Heart right ventricle (tissue), 16 donors: ENCODE measurements at regions of chr12 and their contacts with region 1.

Region 1: GRCh38 chr12:100375038-100375735 is 18.3 kb downstream of the SLC17A8 start:
- DNase-seq: peak; percentile 71 to 74
- ATAC-seq: peak; percentile 78 to 97 (median 94)
- H3K4me3 ChIP-seq: peak overlapping the region in 2 of 10 donors; percentile 5 to 33
- H3K27ac ChIP-seq: no peak overlapping the region
- H3K4me1 ChIP-seq: peaks cover 0 to 14% (median 4%) of the 10 kb centered on the region in 9 donors
- H3K27me3 ChIP-seq: peaks cover 0 to 8% (median 0%) of the 10 kb centered on the region in 7 donors
- CTCF ChIP-seq: peak in 3 of 9 donors; percentile 8 to 22 (median 10)

Region 2: DNA sequence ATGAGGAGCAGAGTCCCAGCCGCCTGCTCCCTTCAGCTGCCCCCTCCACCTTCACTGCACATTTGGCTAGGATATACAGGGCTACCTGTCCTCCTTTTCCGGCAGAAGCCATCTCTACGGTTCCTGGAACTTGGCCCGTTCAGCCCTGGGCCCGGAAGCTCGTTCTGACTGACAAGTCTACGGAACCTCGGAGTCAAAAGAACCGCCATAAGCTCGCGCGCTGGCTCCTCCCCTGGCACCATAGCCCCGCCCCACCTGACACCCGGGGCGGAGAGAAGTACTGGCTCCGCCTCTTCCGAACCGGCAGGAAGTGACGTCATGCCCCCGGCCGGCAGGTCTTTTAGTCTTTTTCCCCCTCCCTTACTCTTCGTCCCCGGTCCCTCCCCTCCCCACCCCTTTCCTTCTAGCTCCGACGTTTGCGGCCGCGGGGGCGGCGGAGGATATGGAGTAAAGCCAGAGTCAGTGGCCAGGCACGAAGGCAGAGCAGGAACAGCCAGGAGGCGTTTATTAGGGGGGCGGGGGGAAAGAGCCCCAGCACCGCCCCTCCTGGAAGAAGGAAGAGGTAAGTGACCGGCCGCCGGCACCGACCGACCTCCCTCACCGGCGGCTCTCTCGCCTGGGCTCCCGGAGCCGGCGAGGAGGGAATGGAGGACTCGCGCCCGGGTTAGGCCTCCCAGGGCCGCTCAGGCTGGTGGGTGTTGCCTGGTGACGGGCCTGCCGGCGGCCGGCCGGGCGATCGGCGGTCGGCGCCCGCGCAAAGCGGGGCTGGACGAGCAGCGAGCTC is 108.2 kb before region 1 on chr12 and contains the starts of genes DEPDC4 and SCYL2:
- intact Hi-C with region 1: no loop called
- DNase-seq: peak; percentile 94 to 95
- ATAC-seq: peak; percentile 96 to 99 (median 98)
- H3K4me3 ChIP-seq: peak within 1 kb of the TSS; percentile 69 to 97 (median 88)
- H3K27ac ChIP-seq: peak within 1 kb of the TSS; percentile 75 to 99 (median 96)
- H3K4me1 ChIP-seq: peaks cover 2 to 48% (median 36%) of the 10 kb centered on the region in 9 donors
- H3K27me3 ChIP-seq: no peaks in the 10 kb centered on the region
- CTCF ChIP-seq: peak in 3 of 9 donors; percentile 22 to 39 (median 38)
- total RNA-seq, gene DEPDC4: 0.47 to 2.0 (median 0.72) TPM
- total RNA-seq, gene SCYL2: 25.8 to 40.0 (median 32.9) TPM

Region 3: DNA sequence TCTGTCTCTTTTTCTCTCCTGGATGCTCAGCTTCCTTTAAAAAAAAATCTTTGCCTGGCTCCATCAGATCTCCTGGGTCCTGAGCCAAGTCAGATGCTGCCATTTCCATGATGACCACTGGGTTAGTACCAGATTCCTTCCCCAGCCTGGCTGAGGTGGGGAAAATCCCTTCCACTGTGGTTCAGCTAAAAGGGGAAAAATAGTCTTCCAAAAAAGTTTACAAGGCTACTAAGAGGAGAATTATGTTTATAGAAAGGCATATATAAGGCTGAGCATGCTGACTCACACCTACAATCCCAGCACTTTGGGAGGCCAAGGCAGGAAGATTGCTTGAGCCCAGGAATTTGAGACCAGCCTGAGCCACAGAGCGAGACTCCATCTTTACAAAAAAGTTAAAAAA is 169.9 kb after region 1 on chr12:
- intact Hi-C with region 1: loop called in 1 of 10 experiments (anchors 10 kb)
- DNase-seq: no peak
- ATAC-seq: no peak
- H3K4me3 ChIP-seq: no peak overlapping the region
- H3K27ac ChIP-seq: no peak overlapping the region
- H3K4me1 ChIP-seq: no peaks in the 10 kb centered on the region
- H3K27me3 ChIP-seq: peaks cover 0 to 3% (median 0%) of the 10 kb centered on the region in 7 donors
- CTCF ChIP-seq: no peak

Region 4: GRCh38 chr12:100877776-100878175 is 502.6 kb after region 1 on chr12:
- intact Hi-C with region 1: no loop called
- DNase-seq: no peak
- ATAC-seq: no peak
- H3K4me3 ChIP-seq: no peak overlapping the region
- H3K27ac ChIP-seq: no peak overlapping the region
- H3K4me1 ChIP-seq: no peaks in the 10 kb centered on the region
- H3K27me3 ChIP-seq: no peaks in the 10 kb centered on the region
- CTCF ChIP-seq: no peak